Activated T-helper 1 cell treated with anti-CD3 and anti-CD28 coated beads, Interleukin-12 subunit alpha, Interleukin-12 subunit beta, Interleukin-2, Interleukin-4 antibody, amounts not matched to agents 30 ng/mL and 10 ng/mL and 1 ng/mL, durations not matched to agents 14 hours and 24 hours and 36 hours (primary cell): ENCODE measurements at regions of chr14 and their contacts with region 1.

Region 1: GRCh38 chr14:102795060-102795925 is 18.0 kb downstream of the TRAF3 start:
- DNase-seq: no peak
- H3K4me3 Mint-ChIP-seq: peak overlapping the region; percentile 54
- H3K27ac Mint-ChIP-seq: peak overlapping the region; percentile 78
- H3K4me1 Mint-ChIP-seq: peaks cover 56% of the 10 kb centered on the region
- H3K27me3 Mint-ChIP-seq: no peaks in the 10 kb centered on the region

Region 2: DNA sequence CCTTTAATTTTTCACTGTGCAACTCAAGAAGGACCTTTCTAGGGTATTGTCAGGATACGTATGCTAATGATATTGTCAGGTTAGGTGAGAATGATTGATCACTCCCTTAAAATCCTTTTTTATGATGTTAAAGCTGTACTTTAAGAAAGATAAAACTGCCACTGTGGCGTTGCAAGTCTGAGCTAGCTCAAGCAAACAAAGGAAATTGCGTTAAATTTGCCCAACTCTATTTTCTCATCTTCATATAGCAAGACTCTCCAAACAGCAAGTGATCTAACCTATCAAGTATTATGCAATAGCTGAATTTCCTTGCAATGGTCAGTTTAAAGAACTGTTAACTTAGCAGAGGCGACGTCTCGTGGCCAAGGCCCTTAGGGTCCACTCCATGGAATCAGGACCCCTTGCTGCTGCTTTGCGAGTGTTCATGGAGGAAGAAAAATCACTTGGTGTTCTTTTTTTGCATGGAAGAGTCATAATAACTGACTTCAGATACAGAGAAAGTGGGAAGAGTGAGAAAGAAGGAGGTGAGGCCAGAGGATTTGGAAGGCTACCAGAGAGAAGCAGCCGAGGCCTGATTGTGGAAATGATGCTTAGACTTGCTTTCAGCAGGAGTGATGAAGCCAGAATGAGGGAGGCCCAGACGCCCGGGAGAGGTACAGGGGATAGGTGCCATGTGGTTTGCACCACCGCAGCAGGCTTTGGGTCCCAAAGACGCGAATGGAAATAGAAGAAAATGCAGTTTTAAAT is 15.5 kb before region 1 on chr14:
- intact Hi-C with region 1: loop called (anchors 2 kb)
- DNase-seq: no peak
- H3K4me3 Mint-ChIP-seq: peak overlapping the region; percentile 91
- H3K27ac Mint-ChIP-seq: peak overlapping the region; percentile 59
- H3K4me1 Mint-ChIP-seq: peaks cover 66% of the 10 kb centered on the region
- H3K27me3 Mint-ChIP-seq: no peaks in the 10 kb centered on the region